AG04449 (cell line): ENCODE measurements at regions of chr12 and their contacts with region 1.

Region 1: GRCh38 chr12:53543539-53543938 is 36.3 kb upstream of the NPFF start:
- DNase-seq: no peak
- H3K4me3 ChIP-seq: no peak overlapping the region
- CTCF ChIP-seq: peak; percentile 95

Region 2: GRCh38 chr12:53518381-53518780 is 25.2 kb before region 1 on chr12:
- CTCF ChIA-PET with region 1: interaction called, 10 read pairs
- POLR2A ChIA-PET with region 1: no interaction called
- DNase-seq: no peak
- H3K4me3 ChIP-seq: no peak overlapping the region
- CTCF ChIP-seq: no peak

Region 3: GRCh38 chr12:53561590-53561953 is 18.0 kb after region 1 on chr12:
- CTCF ChIA-PET with region 1: interaction called, 33 read pairs
- POLR2A ChIA-PET with region 1: no interaction called
- DNase-seq: peak; percentile 72
- H3K4me3 ChIP-seq: no peak overlapping the region; the same call in 1 of the 2 replicates
- CTCF ChIP-seq: no peak

Region 4: DNA sequence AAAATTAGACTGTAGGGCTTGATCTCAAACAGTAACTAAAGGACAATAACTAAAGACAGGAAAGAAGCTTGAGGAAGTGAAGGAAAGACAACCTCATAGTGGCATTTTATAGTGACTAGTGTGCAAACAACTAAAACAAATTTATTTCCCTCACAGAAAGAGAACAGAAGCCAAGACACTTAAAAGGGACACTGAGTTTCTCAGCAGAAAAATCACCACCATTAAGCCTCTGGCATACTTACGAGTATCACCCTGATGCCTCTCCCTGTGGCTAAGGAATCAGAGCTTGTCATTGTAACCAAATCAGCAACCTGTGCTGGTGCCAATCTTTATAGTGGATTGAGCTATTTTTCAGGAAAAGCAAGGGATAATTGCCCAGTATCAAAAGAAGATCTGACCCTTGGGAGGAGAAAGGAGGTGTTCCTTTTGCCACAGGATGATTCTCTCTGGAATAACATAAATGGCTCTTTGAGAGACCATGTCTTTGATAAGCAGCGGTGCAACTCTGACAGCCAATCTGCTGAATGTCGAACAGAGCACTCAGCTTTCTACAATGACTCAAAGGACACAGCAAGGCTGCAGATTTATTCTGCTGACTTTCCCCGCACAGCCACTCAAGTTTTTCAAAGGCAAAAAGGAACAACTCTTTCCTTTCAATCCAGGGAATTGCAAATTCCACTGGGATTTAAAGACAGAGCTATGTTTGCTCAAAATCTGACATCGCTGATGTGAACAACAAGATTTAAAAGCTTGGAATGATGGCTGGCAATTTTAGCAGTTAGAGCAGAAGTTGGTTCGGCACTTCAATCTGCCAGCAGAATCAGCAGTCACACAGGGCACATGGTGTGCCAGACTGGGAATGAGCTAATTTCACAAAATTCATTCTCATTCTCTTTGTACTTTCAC is 48.0 kb after region 1 on chr12:
- CTCF ChIA-PET with region 1: interaction called, 10 read pairs
- POLR2A ChIA-PET with region 1: no interaction called
- DNase-seq: no peak
- H3K4me3 ChIP-seq: no peak overlapping the region
- CTCF ChIP-seq: no peak

Region 5: GRCh38 chr12:53625946-53626701 is 82.6 kb after region 1 on chr12 and contains the start of gene ATF7:
- CTCF ChIA-PET with region 1: interaction called, 26 read pairs
- POLR2A ChIA-PET with region 1: no interaction called
- DNase-seq: peak; percentile 80
- H3K4me3 ChIP-seq: peak within 1 kb of the TSS; percentile 86
- CTCF ChIP-seq: peak; percentile 1

Region 6: GRCh38 chr12:53675651-53676453 is 132.3 kb after region 1 on chr12 and contains the start of gene ATP5MC2:
- CTCF ChIA-PET with region 1: interaction called, 207 read pairs
- POLR2A ChIA-PET with region 1: interaction called, 11 read pairs
- DNase-seq: peak; percentile 88
- H3K4me3 ChIP-seq: peak within 1 kb of the TSS; percentile 90
- CTCF ChIP-seq: peak; percentile 100